MCF 10A (cell line): ENCODE measurements at regions of chr7 and their contacts with region 1.

Region 1: DNA sequence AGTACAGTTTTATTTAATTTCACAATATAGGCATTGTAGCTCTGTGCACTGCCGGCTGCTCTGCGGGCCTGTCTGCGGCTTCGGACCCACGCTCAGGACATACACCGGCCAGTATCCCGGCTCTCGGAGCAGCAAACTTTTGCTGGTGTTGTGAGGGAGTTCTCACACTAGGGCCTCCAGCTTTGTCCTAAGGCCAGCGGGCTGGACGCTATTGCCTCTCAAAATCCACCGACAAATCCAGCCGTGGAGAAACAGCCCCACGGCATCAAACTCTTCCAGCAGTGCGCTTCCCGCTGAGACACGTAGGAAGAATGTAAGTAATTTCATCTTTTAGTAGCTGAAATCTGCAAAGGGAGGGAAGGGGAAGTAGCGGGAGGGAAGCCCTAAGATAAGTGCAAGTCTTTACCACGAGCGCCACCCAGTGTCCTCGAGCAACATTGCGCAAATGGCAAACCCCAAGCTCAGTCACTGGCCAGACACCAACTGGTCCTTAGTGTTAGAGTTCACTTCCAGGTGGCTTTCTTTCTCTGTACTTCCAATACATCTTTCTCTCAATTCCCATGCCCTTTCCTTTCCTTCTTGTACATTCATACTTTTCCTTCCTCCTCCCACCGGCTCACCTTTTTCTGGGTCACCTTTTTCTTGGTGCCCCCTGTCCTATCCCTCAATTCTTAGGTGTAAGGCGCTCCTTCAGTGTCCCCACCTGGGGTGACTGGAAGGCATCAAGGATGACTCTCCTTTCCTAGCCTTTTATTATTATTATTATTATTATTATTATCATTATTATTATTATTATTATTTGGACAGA is 3.0 kb upstream of the DLX5 start:
- DNase-seq: peak; percentile 78
- H3K4me3 Mint-ChIP-seq: peak overlapping the region; percentile 59
- H3K27ac Mint-ChIP-seq: no peak overlapping the region
- H3K4me1 Mint-ChIP-seq: peaks cover 8% of the 10 kb centered on the region
- H3K27me3 Mint-ChIP-seq: peaks cover 57% of the 10 kb centered on the region
- CTCF ChIP-seq: peak; percentile 95

Region 2: DNA sequence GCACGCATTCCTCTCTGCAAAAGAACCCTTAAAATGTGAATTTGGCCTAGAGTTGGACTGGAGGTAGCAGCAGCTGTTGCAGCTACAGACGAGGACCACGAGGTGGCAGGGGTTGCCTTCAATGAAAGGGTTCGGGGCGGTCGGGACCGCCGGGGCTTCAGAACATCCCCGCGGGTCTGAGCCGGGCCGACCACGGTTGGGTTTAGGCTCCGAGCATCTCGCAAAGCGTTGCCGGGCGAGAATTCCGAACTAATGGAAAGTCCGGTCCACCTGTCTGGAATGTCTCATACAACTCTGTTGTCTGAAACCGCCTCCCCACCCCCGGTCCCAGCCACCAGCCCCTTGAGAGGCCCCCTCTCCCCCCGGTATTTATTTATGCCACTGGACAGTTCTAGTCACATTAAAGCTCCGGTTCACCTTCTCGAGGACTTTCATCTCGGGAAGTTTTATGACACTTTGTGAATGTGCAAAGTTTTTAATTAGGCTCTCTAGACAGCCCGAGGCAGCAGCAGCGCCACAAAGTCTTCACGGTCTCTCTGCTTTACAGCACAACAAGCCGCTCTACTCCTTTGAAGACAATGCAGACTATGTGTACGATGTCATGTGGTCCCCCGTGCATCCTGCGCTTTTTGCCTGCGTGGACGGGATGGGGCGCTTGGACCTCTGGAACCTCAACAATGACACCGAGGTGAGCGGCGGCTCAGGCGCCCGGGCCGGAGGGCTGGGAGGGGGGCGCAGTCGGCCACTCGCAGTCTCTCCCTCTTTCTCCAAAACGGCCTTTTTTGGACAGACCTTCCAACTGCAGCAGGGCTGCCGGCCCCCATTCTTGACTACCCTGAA is 951.9 kb before region 1 on chr7:
- CTCF ChIA-PET with region 1: interaction called, 36 read pairs
- POLR2A ChIA-PET with region 1: no interaction called
- intact Hi-C with region 1: loop called (anchors 1 kb)
- DNase-seq: peak; percentile 57
- H3K4me3 Mint-ChIP-seq: peak overlapping the region; percentile 62
- H3K27ac Mint-ChIP-seq: no peak overlapping the region
- H3K4me1 Mint-ChIP-seq: peaks cover 7% of the 10 kb centered on the region
- H3K27me3 Mint-ChIP-seq: peaks cover 75% of the 10 kb centered on the region
- CTCF ChIP-seq: peak; percentile 91

Region 3: GRCh38 chr7:96414931-96415292 is 612.7 kb before region 1 on chr7:
- CTCF ChIA-PET with region 1: interaction called, 23 read pairs
- POLR2A ChIA-PET with region 1: interaction called, 5 read pairs
- intact Hi-C with region 1: loop called (anchors 1 kb)
- DNase-seq: peak; percentile 73
- H3K4me3 Mint-ChIP-seq: no peak overlapping the region
- H3K27ac Mint-ChIP-seq: no peak overlapping the region
- H3K4me1 Mint-ChIP-seq: no peaks in the 10 kb centered on the region
- H3K27me3 Mint-ChIP-seq: peaks cover 29% of the 10 kb centered on the region
- CTCF ChIP-seq: peak; percentile 82

Region 4: GRCh38 chr7:96709381-96710228 is 318.0 kb before region 1 on chr7 and contains the start of gene SEM1:
- CTCF ChIA-PET with region 1: no interaction called
- POLR2A ChIA-PET with region 1: no interaction called
- intact Hi-C with region 1: loop called (anchors 5 kb)
- DNase-seq: peak; percentile 86
- H3K4me3 Mint-ChIP-seq: peak within 1 kb of the TSS; percentile 92
- H3K27ac Mint-ChIP-seq: peak within 1 kb of the TSS; percentile 99
- H3K4me1 Mint-ChIP-seq: peaks cover 10% of the 10 kb centered on the region
- H3K27me3 Mint-ChIP-seq: no peaks in the 10 kb centered on the region
- CTCF ChIP-seq: no peak
- total RNA-seq, gene SEM1: 70.3 and 80.2 TPM in 2 replicates

Region 5: DNA sequence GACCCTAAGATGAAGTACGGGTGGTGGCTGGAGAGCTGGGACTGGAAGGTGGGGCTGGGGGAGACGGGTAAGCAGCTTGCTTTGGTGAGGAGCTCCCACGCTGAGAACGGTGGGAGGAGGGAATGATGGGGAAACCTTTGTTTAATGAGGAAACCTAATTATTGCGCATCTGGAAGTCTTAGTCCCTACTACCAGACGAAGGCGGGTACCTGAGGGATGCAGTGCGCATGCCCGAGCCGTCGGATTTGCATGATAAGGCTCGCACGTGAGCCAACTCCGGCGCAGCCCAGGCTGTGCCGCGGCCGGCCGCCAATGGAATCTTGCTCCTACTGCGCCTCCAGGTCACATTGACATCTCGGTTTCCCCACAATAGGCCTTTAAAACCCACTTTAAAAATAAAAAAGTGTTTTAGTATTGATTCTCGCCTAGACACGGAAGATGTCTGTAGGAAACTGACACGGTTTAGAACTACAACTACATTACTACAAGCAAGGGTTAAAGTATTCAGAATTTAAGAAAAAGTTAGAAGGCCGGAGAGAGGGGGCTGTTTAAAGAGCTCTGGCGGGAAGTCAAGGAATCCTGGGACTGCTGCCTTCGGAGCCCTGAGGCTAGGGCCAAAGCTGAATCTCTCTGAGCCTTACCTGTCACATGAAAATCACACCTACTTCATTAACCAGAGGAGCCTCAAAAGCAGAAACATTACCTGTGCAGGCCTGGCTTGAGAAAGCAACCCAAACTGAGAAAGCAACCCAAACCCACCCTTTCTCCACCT is 34.4 kb before region 1 on chr7:
- CTCF ChIA-PET with region 1: interaction called, 10 read pairs
- POLR2A ChIA-PET with region 1: no interaction called
- intact Hi-C with region 1: no loop called
- DNase-seq: no peak
- H3K4me3 Mint-ChIP-seq: no peak overlapping the region
- H3K27ac Mint-ChIP-seq: no peak overlapping the region
- H3K4me1 Mint-ChIP-seq: no peaks in the 10 kb centered on the region
- H3K27me3 Mint-ChIP-seq: peaks cover 75% of the 10 kb centered on the region
- CTCF ChIP-seq: no peak

Region 6: GRCh38 chr7:97130417-97131139 is 102.9 kb after region 1 on chr7:
- CTCF ChIA-PET with region 1: no interaction called
- POLR2A ChIA-PET with region 1: no interaction called
- intact Hi-C with region 1: no loop called
- DNase-seq: peak; percentile 30
- H3K4me3 Mint-ChIP-seq: no peak overlapping the region
- H3K27ac Mint-ChIP-seq: no peak overlapping the region
- H3K4me1 Mint-ChIP-seq: no peaks in the 10 kb centered on the region
- H3K27me3 Mint-ChIP-seq: no peaks in the 10 kb centered on the region
- CTCF ChIP-seq: no peak